Activated CD4-positive, alpha-beta memory T cell treated with anti-CD3 and anti-CD28 coated beads, Interleukin-2, amount 10 ng/mL, durations not matched to agents 7 days and 5 days (primary cell): ENCODE measurements at regions of chr3 and their contacts with region 1.

Region 1: GRCh38 chr3:111668912-111669488 is 73.9 kb upstream of the ZBED2 start:
- DNase-seq: no peak
- H3K4me3 Mint-ChIP-seq: no peak overlapping the region
- H3K27ac Mint-ChIP-seq: peak overlapping the region; percentile 48
- H3K4me1 Mint-ChIP-seq: peaks cover 80% of the 10 kb centered on the region
- H3K27me3 Mint-ChIP-seq: no peaks in the 10 kb centered on the region

Region 2: GRCh38 chr3:111547631-111548030 is 121.4 kb before region 1 on chr3:
- CTCF ChIA-PET with region 1: interaction called, 18 read pairs
- POLR2A ChIA-PET with region 1: interaction called, 7 read pairs
- DNase-seq: peak; percentile 63
- H3K4me3 Mint-ChIP-seq: no peak overlapping the region
- H3K27ac Mint-ChIP-seq: no peak overlapping the region
- H3K4me1 Mint-ChIP-seq: peaks cover 29% of the 10 kb centered on the region
- H3K27me3 Mint-ChIP-seq: no peaks in the 10 kb centered on the region

Region 3: GRCh38 chr3:111627092-111627491 is 41.9 kb before region 1 on chr3:
- CTCF ChIA-PET with region 1: no interaction called
- POLR2A ChIA-PET with region 1: no interaction called
- DNase-seq: no peak
- H3K4me3 Mint-ChIP-seq: no peak overlapping the region
- H3K27ac Mint-ChIP-seq: no peak overlapping the region
- H3K4me1 Mint-ChIP-seq: peaks cover 8% of the 10 kb centered on the region
- H3K27me3 Mint-ChIP-seq: no peaks in the 10 kb centered on the region

Region 4: GRCh38 chr3:111691293-111691909 is 22.4 kb after region 1 on chr3:
- CTCF ChIA-PET with region 1: interaction called, 7 read pairs
- POLR2A ChIA-PET with region 1: interaction called, 10 read pairs
- DNase-seq: no peak
- H3K4me3 Mint-ChIP-seq: no peak overlapping the region
- H3K27ac Mint-ChIP-seq: no peak overlapping the region
- H3K4me1 Mint-ChIP-seq: peaks cover 51% of the 10 kb centered on the region
- H3K27me3 Mint-ChIP-seq: no peaks in the 10 kb centered on the region

Region 5: DNA sequence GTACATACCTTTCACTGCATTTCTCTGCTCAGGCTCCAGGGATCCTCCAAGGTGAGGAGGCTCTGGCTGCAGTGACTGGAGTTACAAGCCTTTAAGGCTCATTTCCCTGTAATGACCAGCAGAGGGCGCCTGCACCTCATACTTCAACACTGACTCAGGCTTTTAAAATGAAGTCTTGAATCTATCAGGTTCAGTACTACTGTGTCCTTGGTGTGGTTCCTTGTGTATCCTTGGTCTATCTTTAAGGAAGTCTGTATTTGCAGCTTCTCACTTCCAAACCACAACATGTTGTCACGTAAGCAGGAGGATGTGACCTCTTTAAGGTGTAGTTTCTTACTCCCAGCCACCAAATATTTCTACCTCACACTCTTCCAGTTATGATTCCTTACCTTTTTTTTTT is 48.6 kb after region 1 on chr3:
- CTCF ChIA-PET with region 1: interaction called, 120 read pairs
- POLR2A ChIA-PET with region 1: interaction called, 7 read pairs
- DNase-seq: peak; percentile 74
- H3K4me3 Mint-ChIP-seq: no peak overlapping the region
- H3K27ac Mint-ChIP-seq: peak overlapping the region; percentile 1
- H3K4me1 Mint-ChIP-seq: peaks cover 3% of the 10 kb centered on the region
- H3K27me3 Mint-ChIP-seq: no peaks in the 10 kb centered on the region

Region 6: DNA sequence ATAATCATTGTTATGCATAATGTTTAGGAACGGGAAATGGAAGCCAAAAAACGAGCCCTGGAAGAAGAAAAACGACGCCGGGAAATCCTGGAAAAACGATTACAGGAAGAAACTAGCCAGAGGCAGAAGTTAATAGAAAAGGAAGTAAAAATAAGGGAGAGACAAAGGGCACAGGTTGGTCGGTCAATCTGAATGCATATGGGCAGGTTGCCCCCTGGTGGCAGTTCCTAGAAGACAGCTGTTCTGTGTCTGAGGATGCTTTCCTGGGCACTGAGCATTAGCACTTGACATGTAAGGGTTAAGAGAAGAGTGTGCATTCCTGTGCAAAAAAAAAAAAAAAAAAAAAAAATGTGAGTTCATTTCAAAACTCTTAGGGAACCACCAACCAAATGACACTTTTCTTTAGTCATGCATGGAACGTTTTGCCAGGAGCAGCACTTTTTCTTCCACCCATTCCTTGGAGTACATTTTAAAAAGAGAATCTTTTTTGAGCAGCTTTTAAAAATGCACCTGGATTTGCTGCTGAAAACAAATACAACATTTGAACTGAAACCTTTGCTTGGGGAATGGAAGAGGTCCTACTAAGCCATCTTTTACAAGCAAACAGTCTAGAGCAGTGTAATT is 298.8 kb after region 1 on chr3:
- CTCF ChIA-PET with region 1: interaction called, 43 read pairs
- POLR2A ChIA-PET with region 1: no interaction called
- DNase-seq: peak; percentile 82
- H3K4me3 Mint-ChIP-seq: no peak overlapping the region
- H3K27ac Mint-ChIP-seq: no peak overlapping the region
- H3K4me1 Mint-ChIP-seq: peaks cover 12% of the 10 kb centered on the region
- H3K27me3 Mint-ChIP-seq: no peaks in the 10 kb centered on the region

Region 7: DNA sequence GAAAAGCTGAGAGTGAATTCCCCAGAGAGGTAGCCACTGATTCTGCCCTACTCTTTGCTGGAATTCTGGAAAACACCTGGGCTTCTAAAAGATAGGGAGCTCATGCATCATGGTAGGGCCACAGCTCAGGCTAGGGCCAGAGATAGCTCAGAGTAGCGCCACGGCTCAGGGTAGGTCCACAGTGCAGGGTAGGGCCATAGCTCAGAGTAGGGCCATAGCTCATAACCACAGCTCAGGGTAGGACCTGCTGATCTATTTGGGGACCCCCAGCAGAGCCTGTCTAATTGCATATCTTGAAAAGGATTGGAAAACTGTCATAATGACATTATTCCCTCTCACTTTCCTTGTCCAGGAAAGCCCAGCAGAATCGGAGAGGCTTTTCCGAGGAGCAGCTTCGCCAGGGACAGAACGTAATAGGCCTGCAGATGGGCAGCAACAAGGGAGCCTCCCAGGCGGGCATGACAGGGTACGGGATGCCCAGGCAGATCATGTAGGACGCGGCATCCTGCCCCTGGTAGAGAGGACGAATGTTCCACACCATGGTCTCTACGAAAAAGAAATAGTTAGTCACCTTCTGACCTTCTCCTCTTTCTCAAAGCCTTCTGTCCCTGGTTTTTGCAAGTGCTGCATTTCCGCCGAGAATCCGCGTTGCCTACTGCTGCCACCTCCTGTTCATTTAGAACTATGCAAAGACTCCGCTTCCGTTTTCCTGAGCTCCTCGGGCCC is 344.2 kb after region 1 on chr3:
- CTCF ChIA-PET with region 1: interaction called, 18 read pairs
- POLR2A ChIA-PET with region 1: no interaction called
- DNase-seq: peak; percentile 75
- H3K4me3 Mint-ChIP-seq: no peak overlapping the region
- H3K27ac Mint-ChIP-seq: no peak overlapping the region
- H3K4me1 Mint-ChIP-seq: peaks cover 17% of the 10 kb centered on the region
- H3K27me3 Mint-ChIP-seq: no peaks in the 10 kb centered on the region